ENCODE measurements at regions of chr10 and their contacts with region 1.

Region 1: DNA sequence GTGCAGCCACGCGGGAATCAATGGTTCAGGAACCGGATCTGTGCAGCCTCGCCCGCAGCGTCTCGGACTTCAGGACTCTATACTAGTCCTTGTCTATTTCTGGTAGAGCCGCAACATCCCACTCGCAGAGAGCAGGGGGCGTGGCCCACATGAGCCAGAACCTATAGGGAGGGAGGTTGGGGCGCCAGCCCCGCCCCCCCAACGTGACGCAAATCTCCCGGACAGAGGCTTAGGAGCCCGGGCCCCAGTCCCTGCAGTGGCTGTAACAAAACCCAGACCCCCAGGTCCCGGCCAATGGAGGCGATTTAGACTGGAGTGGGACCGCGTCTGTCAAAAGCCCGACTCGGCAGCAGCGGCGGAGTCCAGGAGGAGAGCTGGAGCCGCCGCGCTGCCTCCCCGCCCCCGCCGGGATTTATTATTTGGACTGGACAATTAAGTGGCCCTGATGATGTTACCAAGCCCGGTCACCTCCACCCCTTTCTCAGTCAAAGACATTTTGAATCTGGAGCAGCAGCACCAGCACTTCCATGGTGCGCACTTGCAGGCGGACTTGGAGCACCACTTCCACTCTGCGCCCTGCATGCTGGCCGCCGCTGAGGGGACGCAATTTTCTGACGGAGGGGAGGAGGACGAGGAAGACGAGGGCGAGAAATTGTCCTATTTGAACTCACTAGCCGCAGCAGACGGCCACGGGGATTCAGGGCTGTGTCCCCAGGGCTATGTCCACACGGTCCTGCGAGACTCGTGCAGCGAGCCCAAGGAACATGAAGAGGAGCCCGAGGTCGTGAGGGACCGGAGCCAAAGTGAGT is at the start of gene NKX2-3:
- DNase-seq: peak; percentile 71
- H3K4me3 Mint-ChIP-seq: peak within 1 kb of the TSS; percentile 21
- H3K27ac Mint-ChIP-seq: no peak within 1 kb of the TSS
- H3K4me1 Mint-ChIP-seq: peaks cover 24% of the 10 kb centered on the region
- H3K27me3 Mint-ChIP-seq: peaks cover 89% of the 10 kb centered on the region
- total RNA-seq, gene NKX2-3: not detected in 2 replicates

Region 2: DNA sequence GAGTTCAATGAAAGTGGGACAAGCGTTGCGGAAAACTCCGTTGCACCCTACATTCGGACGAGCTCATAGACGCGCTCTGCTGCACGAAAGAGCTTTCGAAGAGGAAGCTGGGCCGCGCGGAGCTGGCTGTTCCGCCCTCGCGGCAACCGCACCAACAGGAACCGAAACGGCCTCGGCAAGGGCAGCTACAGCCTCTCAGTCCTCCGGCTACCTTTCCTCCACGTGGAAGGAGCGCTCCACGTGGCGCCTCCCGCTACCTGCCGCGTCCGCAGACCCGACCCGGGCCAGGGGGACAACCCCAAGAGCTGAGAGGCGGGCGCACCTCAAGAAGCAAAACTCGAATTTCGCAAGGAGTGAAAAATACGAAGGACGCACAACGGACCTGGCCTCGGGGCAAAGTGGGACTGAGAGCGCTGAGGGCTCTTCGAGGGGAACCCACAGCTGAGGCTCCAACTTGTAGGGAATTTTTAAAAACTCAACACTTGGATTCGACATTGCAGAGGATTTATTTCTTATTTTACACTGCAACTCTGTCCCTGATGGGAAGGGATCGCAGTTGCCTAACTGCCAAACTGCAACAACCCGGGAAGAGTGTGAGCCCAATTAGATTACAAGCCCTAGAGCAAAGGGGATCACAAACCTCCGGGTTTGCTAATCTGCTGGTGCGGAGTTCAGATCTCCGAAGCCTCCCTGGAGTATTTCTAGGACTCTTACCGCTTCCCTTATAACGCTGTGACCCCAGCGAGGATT is 298.7 kb before region 1 on chr10:
- intact Hi-C with region 1: loop called (anchors 2 kb)
- DNase-seq: peak; percentile 81
- H3K4me3 Mint-ChIP-seq: peak overlapping the region; percentile 71
- H3K27ac Mint-ChIP-seq: peak overlapping the region; percentile 25
- H3K4me1 Mint-ChIP-seq: peaks cover 11% of the 10 kb centered on the region
- H3K27me3 Mint-ChIP-seq: peaks cover 83% of the 10 kb centered on the region

Region 3: GRCh38 chr10:99430451-99431189 is 102.3 kb before region 1 on chr10 and contains the start of gene GOT1:
- intact Hi-C with region 1: no loop called
- DNase-seq: peak; percentile 98
- H3K4me3 Mint-ChIP-seq: peak within 1 kb of the TSS; percentile 99
- H3K27ac Mint-ChIP-seq: peak within 1 kb of the TSS; percentile 98
- H3K4me1 Mint-ChIP-seq: peaks cover 30% of the 10 kb centered on the region
- H3K27me3 Mint-ChIP-seq: no peaks in the 10 kb centered on the region
- total RNA-seq, gene GOT1: 37.2 and 38.0 TPM in 2 replicates

Region 4: DNA sequence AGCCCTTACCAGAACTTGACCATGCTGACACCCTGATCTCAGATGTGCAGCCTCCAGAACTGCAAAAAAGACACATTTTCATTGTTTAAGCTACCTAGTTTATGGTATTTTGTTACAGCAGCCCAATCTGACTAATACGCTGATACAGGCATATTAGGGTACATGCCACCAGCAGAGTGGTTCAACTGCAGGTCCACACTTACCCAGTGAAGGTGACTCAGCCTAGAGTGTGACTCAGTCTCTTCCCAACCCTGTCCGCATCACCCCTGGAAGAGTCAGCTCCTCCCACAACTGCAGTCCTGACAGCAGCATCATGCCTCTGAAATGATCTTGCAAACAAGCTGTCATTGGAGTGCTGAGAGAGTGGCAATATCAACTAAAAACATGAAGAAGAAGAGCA is 71.7 kb before region 1 on chr10:
- intact Hi-C with region 1: no loop called
- DNase-seq: no peak
- H3K4me3 Mint-ChIP-seq: no peak overlapping the region
- H3K27ac Mint-ChIP-seq: no peak overlapping the region
- H3K4me1 Mint-ChIP-seq: no peaks in the 10 kb centered on the region
- H3K27me3 Mint-ChIP-seq: peaks cover 30% of the 10 kb centered on the region

Region 5: DNA sequence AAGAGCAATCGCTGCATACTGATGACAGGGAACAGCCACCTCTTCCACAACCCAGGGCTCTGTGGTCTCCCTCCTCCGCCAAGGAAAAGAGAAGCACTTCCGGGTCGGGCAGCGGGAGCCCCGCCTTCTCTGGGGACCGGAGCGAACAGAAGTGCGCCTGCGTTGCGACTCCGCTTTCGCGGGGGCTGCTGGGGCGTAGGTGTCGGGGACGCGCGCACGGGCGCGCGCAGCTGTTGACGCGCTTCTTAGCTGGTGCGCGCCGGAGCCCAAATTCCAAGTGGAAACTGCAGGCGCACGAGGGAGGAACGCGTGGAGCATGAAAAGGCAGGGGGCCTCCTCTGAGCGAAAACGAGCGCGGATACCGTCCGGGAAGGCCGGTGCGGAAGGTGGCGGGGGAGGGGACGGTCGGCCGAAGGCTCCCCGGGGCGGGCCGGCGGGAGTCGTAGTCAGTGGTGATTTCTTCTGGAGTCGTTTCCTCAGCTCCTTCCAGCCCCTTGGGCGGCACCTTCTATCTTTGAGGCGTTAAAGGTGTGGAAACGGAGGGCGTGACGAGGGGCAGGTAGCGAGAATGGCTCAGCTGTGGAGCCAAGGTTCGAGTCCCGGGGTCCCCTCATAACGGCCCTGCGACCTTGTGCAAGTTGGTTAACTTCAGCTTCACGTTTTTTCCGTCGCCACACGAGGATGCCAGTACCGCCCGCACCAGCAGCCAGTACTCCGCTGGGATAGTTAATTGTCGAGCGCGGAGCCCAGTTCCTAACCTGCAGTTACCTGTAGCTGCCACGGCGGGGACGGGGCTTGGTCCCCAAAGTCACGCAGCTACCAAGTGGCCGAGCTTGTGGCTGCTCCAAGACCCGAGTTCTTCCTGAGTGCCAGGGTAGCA is 199.4 kb after region 1 on chr10 and contains the starts of genes COX15 and CUTC:
- intact Hi-C with region 1: no loop called
- DNase-seq: peak; percentile 99
- H3K4me3 Mint-ChIP-seq: peak within 1 kb of the TSS; percentile 98
- H3K27ac Mint-ChIP-seq: peak within 1 kb of the TSS; percentile 98
- H3K4me1 Mint-ChIP-seq: peaks cover 26% of the 10 kb centered on the region
- H3K27me3 Mint-ChIP-seq: no peaks in the 10 kb centered on the region
- total RNA-seq, gene COX15: 40.7 and 41.1 TPM in 2 replicates
- total RNA-seq, gene CUTC: 43.1 and 46.8 TPM in 2 replicates